AG04449 (cell line): ENCODE measurements at regions of chr1 and their contacts with region 1.

Region 1: DNA sequence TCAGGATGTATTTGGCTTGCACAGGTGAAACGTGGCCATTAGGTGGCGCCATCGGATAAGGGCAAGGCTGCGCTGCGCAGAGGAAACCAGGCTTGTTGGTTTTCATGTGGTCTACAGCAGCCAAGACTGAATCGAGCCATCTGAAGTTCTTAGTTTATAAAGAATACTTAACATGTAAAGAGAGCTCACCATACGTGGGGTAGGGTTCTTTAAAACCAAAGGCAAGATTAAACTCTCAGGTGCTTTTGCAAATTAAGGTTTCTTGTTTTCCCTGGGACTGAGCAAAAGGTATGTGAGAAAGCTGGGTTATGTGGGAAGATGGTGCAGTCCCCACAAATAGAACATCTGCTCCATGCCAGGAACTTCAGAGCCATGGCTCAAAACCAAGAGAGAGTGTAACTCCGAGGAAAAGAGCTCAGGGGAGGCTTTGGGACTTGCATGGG is 9.3 kb downstream of the MASP2 start:
- DNase-seq: peak; percentile 45
- H3K4me3 ChIP-seq: no peak overlapping the region
- CTCF ChIP-seq: peak; percentile 92

Region 2: DNA sequence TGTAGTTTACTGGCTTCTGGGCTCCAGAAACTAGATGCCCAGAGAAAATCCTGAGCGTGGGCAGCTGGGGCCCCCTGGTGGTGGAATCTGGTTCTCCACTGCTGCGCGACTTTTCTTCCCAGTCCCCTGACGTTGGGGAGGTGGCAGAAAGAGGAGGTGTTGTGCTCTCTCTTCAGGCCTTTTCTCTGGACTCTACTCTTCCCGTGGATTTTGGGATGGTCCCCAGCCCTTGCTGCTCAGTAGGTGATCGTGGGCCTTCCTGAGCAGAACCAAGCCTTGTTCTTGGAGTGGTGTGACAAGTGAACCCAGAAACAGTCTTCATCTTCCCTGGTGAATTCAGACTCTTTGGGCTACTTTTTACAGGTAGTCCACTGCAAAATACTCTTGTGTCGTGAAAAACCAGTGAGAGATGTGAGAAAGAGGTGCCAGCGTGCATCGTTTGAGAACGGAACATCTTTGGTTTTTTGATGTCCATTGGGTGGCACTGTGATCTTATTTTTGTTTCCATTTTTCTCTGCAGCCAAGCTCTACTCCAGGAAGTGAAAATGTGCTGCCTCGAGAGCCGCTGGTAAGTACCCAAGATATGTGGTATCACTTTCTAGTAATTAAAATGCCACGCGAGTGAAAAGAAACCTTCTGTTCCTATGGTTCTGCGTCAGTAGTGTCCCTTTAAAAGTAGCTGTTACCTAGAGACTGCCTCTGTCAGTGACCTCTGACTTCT is 542.8 kb before region 1 on chr1:
- CTCF ChIA-PET with region 1: interaction called, 12 read pairs
- POLR2A ChIA-PET with region 1: no interaction called
- DNase-seq: no peak
- H3K4me3 ChIP-seq: peak overlapping the region; percentile 46
- CTCF ChIP-seq: peak; percentile 92

Region 3: DNA sequence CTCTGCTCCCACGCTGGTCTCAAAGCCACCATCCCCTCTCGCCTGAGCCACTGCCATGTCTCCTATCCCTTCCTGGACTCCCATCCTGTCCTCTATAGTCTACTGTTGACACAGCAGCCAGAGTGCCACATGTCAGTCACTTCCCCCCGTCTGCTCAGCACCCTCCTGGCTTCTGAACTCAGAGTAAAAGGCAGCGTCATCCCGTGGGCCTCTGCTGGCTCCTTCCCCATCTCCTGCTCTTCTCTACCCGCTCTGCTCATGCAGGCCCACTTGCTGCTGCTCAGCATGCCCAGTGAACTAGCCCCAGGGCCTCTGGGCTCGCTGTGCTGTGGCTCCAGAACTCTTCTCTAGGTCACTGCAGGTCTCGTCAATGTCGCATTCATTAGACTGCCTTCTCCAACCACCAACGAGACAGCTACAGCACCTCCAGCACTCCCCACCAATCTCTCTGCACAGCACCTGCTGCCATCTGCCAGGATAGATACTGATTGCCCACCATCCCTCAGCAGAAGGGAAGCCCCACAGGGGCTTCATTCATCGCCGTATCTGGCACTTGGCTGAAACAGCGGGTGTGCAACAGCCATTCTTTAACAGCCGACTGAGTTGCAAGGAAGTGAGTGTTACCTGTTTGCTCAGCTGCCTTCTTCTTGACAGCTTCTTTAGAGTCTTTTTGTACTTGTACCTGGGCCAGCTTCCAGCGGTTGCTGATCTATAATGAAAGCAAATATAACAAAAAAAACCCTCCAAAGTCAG is 33.9 kb after region 1 on chr1:
- CTCF ChIA-PET with region 1: interaction called, 29 read pairs
- POLR2A ChIA-PET with region 1: no interaction called
- DNase-seq: no peak
- H3K4me3 ChIP-seq: no peak overlapping the region
- CTCF ChIP-seq: no peak

Region 4: GRCh38 chr1:11178021-11179015 is 140.6 kb after region 1 on chr1:
- CTCF ChIA-PET with region 1: interaction called, 15 read pairs
- POLR2A ChIA-PET with region 1: no interaction called
- DNase-seq: no peak
- H3K4me3 ChIP-seq: no peak overlapping the region
- CTCF ChIP-seq: no peak

Region 5: DNA sequence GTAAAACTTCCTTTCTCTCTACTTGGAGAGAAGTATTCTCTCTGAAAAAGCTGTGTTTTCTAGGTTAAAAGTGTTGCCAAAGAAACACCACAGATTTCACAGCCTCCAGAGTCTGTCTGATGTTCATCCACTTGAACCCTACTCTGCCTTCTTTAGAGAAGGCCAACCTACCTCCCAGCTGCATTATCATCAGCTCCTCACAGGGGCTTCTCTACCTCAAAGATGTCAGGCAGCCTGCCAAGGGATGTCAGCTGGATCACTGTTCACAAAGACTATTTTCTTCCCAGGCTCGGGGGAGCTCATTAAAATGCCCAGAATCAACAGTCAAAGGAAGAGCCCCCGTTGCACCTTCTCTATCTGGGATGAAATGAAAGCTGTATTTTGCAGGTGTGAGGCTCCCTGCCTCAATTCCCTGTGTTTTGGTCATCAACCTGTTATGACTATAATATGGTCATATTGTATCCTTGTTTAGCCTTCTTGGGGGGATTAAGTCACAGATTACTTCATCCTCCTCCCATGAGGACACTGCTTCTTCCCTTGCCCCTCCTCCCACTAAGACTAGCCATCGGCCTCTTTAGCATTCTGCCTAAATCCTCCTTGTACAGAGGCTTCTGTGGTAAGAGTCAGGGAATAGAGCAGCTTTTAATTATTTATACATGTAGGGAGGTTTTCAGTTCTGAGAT is 177.1 kb after region 1 on chr1:
- CTCF ChIA-PET with region 1: interaction called, 11 read pairs
- POLR2A ChIA-PET with region 1: no interaction called
- DNase-seq: no peak
- H3K4me3 ChIP-seq: no peak overlapping the region
- CTCF ChIP-seq: no peak

Region 6: GRCh38 chr1:11248155-11248554 is 210.4 kb after region 1 on chr1:
- CTCF ChIA-PET with region 1: interaction called, 54 read pairs
- POLR2A ChIA-PET with region 1: no interaction called
- DNase-seq: no peak
- H3K4me3 ChIP-seq: no peak overlapping the region
- CTCF ChIP-seq: no peak

Region 7: DNA sequence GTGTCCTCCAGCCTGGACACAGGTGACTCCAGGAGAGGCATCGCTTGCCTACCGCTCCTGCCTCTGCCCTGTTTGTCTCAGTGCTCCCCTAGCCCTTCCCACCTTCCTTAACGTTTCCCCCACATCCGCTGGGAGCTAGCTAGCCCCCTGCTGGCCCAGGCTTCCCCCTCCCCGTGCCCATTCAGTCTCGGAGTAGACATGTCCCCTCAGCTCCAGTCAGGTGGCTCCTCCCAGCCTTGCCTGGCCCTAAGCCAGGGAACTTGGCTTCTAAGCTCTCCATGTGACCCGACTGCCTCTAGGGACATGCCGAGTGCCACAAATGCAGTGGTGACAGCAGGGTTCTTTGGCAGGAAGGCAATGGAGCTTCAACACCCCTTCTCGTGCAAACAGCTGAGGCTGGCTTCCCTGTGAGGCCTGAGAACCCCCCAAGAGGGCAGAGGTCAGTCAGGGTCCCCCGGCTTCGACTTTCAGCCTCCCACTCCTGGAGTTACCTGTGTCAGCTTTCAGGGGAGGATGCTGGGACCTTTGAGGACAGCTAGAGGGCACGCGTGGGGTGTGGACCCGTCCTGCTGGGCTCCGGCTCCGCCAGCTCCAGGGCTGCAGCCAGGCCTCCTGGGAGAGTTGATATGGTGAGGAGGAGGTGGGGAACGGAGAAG is 670.0 kb after region 1 on chr1:
- CTCF ChIA-PET with region 1: interaction called, 10 read pairs
- POLR2A ChIA-PET with region 1: no interaction called
- DNase-seq: no peak
- H3K4me3 ChIP-seq: no peak overlapping the region
- CTCF ChIP-seq: no peak